A549 (cell line): ENCODE measurements at regions of chr7 and their contacts with region 1.

Region 1: DNA sequence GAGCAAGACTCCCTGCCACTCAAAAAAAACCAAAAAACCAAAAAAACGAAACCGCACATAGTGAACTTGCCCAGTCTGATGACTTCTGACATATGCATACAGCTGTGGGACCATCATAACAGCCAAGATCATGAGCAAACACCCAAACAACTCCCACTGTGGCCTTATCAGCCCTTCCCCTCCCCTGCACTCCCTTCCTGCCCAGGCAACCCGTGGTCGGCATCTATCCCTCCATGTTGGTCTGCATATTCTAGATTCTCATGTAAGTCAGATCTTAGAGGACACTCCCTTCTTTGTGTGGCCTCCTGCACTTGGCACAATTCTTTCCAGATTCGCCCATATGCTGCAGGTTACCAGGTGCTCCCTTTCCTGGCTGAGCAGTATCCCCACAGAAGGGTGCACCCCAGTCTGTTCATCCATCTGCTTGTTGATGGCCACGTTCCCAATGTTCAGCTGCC is 72.8 kb downstream of the GNA12 start:
- DNase-seq: no peak
- ATAC-seq: no peak
- H3K4me3 ChIP-seq: no peak overlapping the region
- H3K27ac ChIP-seq: no peak overlapping the region
- H3K4me1 ChIP-seq: no peaks in the 10 kb centered on the region
- CTCF ChIP-seq: no peak
- EP300 ChIP-seq: no peak
- POLR2A ChIP-seq: no peak
- RAD21 ChIP-seq: no peak

Region 2: DNA sequence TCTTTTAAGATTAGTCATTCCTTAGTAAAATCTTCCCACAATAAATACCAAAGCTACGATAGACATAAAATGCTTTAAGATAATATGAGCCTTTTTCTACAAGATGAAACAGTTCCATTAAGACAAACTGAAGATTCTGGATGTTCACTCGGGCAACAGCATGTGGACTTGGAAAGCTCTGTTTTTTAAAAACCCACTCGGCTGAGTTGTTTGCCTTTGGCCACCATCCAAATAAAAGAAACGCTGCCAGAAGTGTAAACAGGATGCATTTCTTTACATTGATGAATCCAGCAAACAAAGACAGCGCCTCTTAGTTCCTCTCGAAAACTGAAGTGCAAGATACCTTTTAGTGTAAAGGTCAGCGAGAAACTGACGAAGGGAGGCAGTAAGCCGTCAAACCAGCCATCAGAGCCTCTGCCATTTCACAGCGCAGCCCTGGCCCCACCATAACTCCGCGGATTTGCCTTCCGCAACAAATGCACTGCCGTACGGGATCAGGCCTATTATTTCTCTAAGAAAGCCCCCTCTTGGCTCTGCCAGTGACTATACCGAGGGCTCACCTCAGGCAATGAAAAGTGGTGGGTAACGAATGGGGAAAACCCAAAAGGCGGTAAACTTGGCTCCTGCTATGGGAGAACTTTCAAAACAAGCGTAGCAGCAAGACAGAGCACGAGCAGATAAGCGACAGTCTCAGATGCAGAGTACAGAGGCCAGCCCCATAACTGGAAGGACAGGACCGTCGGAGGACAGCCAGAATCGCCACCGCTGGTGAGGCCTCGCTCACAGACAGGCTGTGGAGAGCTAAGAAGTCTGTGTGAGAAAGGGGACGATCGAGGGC is 31.4 kb after region 1 on chr7:
- CTCF ChIA-PET with region 1: no interaction called
- POLR2A ChIA-PET with region 1: interaction called, 10 read pairs
- DNase-seq: peak; percentile 53 to 74
- ATAC-seq: peak; percentile 64 to 84
- H3K4me3 ChIP-seq: peak overlapping the region; percentile 31
- H3K27ac ChIP-seq: peak overlapping the region; percentile 74 to 87
- H3K4me1 ChIP-seq: peaks cover 40% of the 10 kb centered on the region
- CTCF ChIP-seq: no peak
- EP300 ChIP-seq: no peak
- POLR2A ChIP-seq: no peak
- RAD21 ChIP-seq: peak in 1 of 2 experiments; percentile 11; a peak in 1 of 5 replicates